Activated naive CD4-positive, alpha-beta T cell treated with anti-CD3 and anti-CD28 coated beads for 36 hours (primary cell): ENCODE measurements at regions of chr1 and their contacts with region 1.

Region 1: GRCh38 chr1:6026095-6026809 is 19.4 kb upstream of the KCNAB2 start:
- DNase-seq: peak; percentile 97
- H3K4me3 Mint-ChIP-seq: peak overlapping the region; percentile 88
- H3K27ac Mint-ChIP-seq: peak overlapping the region; percentile 94
- H3K4me1 Mint-ChIP-seq: peaks cover 47% of the 10 kb centered on the region
- H3K27me3 Mint-ChIP-seq: no peaks in the 10 kb centered on the region

Region 2: GRCh38 chr1:5975133-5975880 is 50.9 kb before region 1 on chr1:
- CTCF ChIA-PET with region 1: no interaction called
- intact Hi-C with region 1: no loop called
- DNase-seq: peak; percentile 42
- H3K4me3 Mint-ChIP-seq: no peak overlapping the region
- H3K27ac Mint-ChIP-seq: no peak overlapping the region
- H3K4me1 Mint-ChIP-seq: peaks cover 4% of the 10 kb centered on the region
- H3K27me3 Mint-ChIP-seq: no peaks in the 10 kb centered on the region

Region 3: GRCh38 chr1:5992026-5992813 is 34.0 kb before region 1 on chr1 and contains the start of gene NPHP4:
- CTCF ChIA-PET with region 1: interaction called, 4 read pairs
- intact Hi-C with region 1: loop called (anchors 1 kb)
- DNase-seq: peak; percentile 100
- H3K4me3 Mint-ChIP-seq: peak within 1 kb of the TSS; percentile 81
- H3K27ac Mint-ChIP-seq: peak within 1 kb of the TSS; percentile 79
- H3K4me1 Mint-ChIP-seq: peaks cover 22% of the 10 kb centered on the region
- H3K27me3 Mint-ChIP-seq: no peaks in the 10 kb centered on the region
- total RNA-seq, gene NPHP4: 10.7 to 11.2 TPM

Region 4: GRCh38 chr1:6037338-6037762 is 11.1 kb after region 1 on chr1:
- CTCF ChIA-PET with region 1: interaction called, 3 read pairs
- intact Hi-C with region 1: loop called (anchors 1 kb)
- DNase-seq: peak; percentile 41
- H3K4me3 Mint-ChIP-seq: no peak overlapping the region
- H3K27ac Mint-ChIP-seq: peak overlapping the region; percentile 17
- H3K4me1 Mint-ChIP-seq: peaks cover 43% of the 10 kb centered on the region
- H3K27me3 Mint-ChIP-seq: no peaks in the 10 kb centered on the region

Region 5: DNA sequence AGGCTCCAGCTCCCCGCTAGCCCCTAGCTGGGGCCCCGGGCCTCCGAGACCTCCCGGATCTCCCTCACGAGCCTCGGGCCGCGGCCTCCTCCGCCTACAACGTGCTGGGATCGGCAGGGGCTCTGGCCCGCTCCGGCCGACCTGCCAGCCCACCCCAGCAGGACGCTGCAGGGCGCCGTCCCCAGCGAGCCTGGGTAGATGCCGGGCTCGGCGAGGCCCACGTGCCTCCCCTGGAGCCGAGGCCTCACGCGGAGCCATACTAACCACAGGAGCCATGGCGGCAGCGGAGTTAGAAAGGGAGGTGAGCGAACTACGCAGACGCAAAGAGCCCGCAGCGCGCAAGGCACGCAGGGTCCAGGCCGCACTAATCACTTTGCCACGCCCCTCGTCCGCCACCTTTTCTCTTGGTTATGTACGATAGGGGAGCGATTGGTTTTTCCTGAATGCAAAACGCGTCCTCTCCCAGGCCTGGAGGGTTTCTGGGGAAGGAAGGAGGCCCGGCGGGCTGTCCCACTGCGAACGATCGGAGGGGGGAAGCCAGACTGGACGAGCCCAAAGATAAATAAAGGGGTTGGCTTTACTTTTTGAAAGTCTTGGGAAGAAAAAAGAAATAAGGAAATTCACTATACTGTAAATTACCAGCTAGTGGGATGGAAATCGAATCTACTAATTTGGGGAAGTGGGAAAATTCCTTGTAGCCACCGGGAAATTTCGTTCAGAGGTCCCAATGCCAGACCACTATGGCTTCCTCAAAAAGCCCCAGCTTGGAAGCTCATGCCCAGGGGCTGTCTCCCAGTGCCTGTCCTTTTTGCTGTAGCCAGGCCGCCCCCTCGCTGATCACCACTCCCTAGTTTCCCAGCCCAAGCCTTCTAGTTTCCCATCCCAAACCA is 173.3 kb after region 1 on chr1 and contains the start of gene RPL22:
- CTCF ChIA-PET with region 1: no interaction called
- intact Hi-C with region 1: loop called (anchors 1 kb)
- DNase-seq: peak; percentile 99
- H3K4me3 Mint-ChIP-seq: peak within 1 kb of the TSS; percentile 91
- H3K27ac Mint-ChIP-seq: peak within 1 kb of the TSS; percentile 95
- H3K4me1 Mint-ChIP-seq: peaks cover 39% of the 10 kb centered on the region
- H3K27me3 Mint-ChIP-seq: no peaks in the 10 kb centered on the region
- total RNA-seq, gene RPL22: 507 to 553 TPM

Region 6: DNA sequence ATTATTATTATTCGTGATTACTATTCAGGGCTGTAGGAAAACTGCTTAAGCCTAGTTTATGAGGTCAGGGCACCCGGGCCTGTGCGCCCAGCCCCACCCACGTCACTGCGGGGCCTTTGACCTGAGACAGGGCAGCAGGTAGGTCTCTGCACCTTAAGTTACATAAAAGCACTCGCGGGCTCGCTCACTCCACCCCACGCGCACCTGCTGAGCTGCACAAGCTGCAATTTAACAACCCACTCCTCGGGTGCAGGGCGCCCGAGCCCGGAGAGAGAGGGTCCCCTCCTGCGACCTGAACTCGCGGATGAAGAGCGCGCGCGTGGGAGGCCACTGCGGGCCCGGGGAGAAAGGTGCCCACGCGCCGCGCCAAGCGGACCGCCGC is 209.0 kb after region 1 on chr1:
- CTCF ChIA-PET with region 1: no interaction called
- intact Hi-C with region 1: loop called (anchors 1 kb)
- DNase-seq: peak; percentile 22
- H3K4me3 Mint-ChIP-seq: peak overlapping the region; percentile 87
- H3K27ac Mint-ChIP-seq: peak overlapping the region; percentile 26
- H3K4me1 Mint-ChIP-seq: peaks cover 26% of the 10 kb centered on the region
- H3K27me3 Mint-ChIP-seq: peaks cover 10% of the 10 kb centered on the region

Region 7: GRCh38 chr1:6393400-6394187 is 367.3 kb after region 1 on chr1 and contains the start of gene ACOT7:
- CTCF ChIA-PET with region 1: interaction called, 3 read pairs
- intact Hi-C with region 1: loop called (anchors 1 kb)
- DNase-seq: peak; percentile 94
- H3K4me3 Mint-ChIP-seq: peak within 1 kb of the TSS; percentile 81
- H3K27ac Mint-ChIP-seq: peak within 1 kb of the TSS; percentile 84
- H3K4me1 Mint-ChIP-seq: peaks cover 21% of the 10 kb centered on the region
- H3K27me3 Mint-ChIP-seq: no peaks in the 10 kb centered on the region
- total RNA-seq, gene ACOT7: 74.2 to 77.6 TPM

Region 8: DNA sequence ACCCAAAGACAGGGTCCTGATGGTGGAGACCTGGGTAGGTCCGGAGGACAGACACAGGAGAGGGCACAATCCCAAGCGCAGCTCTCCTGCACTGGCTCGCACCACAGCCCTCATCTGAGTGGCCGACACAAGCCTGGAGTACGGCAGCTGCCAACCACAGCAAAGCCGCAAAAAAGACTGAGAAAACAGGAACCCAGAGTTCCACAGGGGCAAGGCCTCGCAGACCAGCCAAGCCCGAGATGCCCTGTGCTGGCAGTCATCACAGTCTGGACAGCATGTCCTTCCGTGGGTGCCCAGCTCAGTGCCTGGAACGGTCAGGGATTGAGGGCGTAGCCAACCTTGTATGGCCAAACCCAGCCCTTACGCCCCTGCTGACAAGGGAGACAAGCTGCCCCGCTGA is 565.0 kb after region 1 on chr1:
- CTCF ChIA-PET with region 1: no interaction called
- intact Hi-C with region 1: no loop called
- DNase-seq: no peak
- H3K4me3 Mint-ChIP-seq: no peak overlapping the region
- H3K27ac Mint-ChIP-seq: peak overlapping the region; percentile 53
- H3K4me1 Mint-ChIP-seq: peaks cover 26% of the 10 kb centered on the region
- H3K27me3 Mint-ChIP-seq: no peaks in the 10 kb centered on the region